Naive thymus-derived CD4-positive, alpha-beta T cell (primary cell): ENCODE measurements at regions of chr1 and their contacts with region 1.

Region 1: GRCh38 chr1:151156515-151156819 is at the start of gene TNFAIP8L2:
- DNase-seq: peak in 7 of 9 donors; percentile 50 to 75 (median 66)
- ATAC-seq: peak; percentile 90
- H3K4me3 ChIP-seq: peak within 1 kb of the TSS; percentile 98
- H3K4me3 Mint-ChIP-seq: peak within 1 kb of the TSS; percentile 93 to 100 (median 99)
- H3K27ac ChIP-seq: peak within 1 kb of the TSS; percentile 78
- H3K27ac Mint-ChIP-seq: peak within 1 kb of the TSS; percentile 88 to 97 (median 95)
- H3K4me1 ChIP-seq: peaks cover 23 to 27% of the 10 kb centered on the region in 2 donors
- H3K4me1 Mint-ChIP-seq: peaks cover 34 to 61% (median 46%) of the 10 kb centered on the region in 7 donors
- H3K27me3 ChIP-seq: no peaks in the 10 kb centered on the region
- H3K27me3 Mint-ChIP-seq: no peaks in the 10 kb centered on the region
- total RNA-seq, gene TNFAIP8L2: 3.1 to 59.4 (median 37.6) TPM

Region 2: GRCh38 chr1:150389650-150390049 is 766.8 kb before region 1 on chr1:
- CTCF ChIA-PET with region 1: no interaction called
- POLR2A ChIA-PET with region 1: no interaction called
- intact Hi-C with region 1: no loop called
- DNase-seq: no peak
- ATAC-seq: no peak
- H3K4me3 ChIP-seq: no peak overlapping the region
- H3K4me3 Mint-ChIP-seq: peak overlapping the region in 1 of 10 donors; percentile 35
- H3K27ac ChIP-seq: no peak overlapping the region
- H3K27ac Mint-ChIP-seq: peak overlapping the region in 5 of 9 donors; percentile 1 to 63 (median 24)
- H3K4me1 ChIP-seq: peaks cover 5 to 17% of the 10 kb centered on the region in 2 donors
- H3K4me1 Mint-ChIP-seq: peaks cover 26 to 78% (median 67%) of the 10 kb centered on the region in 7 donors
- H3K27me3 ChIP-seq: no peaks in the 10 kb centered on the region
- H3K27me3 Mint-ChIP-seq: no peaks in the 10 kb centered on the region

Region 3: DNA sequence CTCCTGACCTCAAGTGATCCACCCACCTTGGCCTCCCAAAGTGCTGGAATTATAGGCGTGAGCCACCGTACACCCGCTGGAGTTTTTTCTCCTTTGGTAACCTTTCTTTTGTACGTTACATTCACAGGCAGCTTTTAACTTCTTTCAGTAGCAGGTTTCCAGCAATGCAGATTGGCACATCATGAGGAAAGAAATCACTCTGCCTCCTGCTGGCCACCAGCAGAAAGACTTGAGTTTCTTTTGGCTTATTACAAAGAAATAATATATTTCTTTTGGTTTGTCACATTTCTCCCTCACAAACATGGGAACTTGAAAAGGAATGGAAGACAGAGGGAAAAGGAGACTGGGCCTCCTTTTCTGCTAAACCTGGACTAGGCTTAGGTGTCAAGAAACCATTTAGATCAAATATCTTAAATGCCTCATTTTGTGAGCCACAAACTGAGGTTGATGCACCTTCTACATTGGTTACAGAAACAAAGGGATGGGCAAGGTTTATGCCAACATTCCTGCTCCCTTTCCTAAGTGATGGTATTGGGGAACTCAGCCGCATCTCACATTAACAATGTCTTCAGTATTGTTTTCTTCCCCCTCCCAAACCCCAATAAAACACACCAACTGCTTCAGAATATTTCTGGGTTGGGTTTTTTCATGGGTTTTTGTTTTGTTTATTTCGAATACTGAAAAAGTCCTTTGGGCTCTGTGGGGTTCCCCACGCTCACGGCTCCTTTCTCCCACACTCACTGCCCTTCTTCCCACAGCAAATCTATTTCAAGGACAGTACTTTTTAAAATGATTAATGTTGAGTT is 534.8 kb before region 1 on chr1:
- CTCF ChIA-PET with region 1: no interaction called
- POLR2A ChIA-PET with region 1: no interaction called
- intact Hi-C with region 1: loop called (anchors 2 to 10 kb)
- DNase-seq: peak in 7 of 9 donors; percentile 53 to 74 (median 65)
- ATAC-seq: peak; percentile 78
- H3K4me3 ChIP-seq: no peak overlapping the region
- H3K4me3 Mint-ChIP-seq: peak overlapping the region in 8 of 10 donors; percentile 16 to 64 (median 46)
- H3K27ac ChIP-seq: peak overlapping the region; percentile 49
- H3K27ac Mint-ChIP-seq: peak overlapping the region; percentile 48 to 91 (median 83)
- H3K4me1 ChIP-seq: peaks cover 5 to 32% of the 10 kb centered on the region in 2 donors
- H3K4me1 Mint-ChIP-seq: peaks cover 17 to 65% (median 51%) of the 10 kb centered on the region in 7 donors
- H3K27me3 ChIP-seq: no peaks in the 10 kb centered on the region
- H3K27me3 Mint-ChIP-seq: no peaks in the 10 kb centered on the region

Region 4: GRCh38 chr1:150979092-150980056 is 177.1 kb before region 1 on chr1:
- CTCF ChIA-PET with region 1: no interaction called
- POLR2A ChIA-PET with region 1: interaction called, 4 read pairs
- intact Hi-C with region 1: loop called (anchors 1 kb)
- DNase-seq: peak; percentile 68 to 93 (median 84)
- ATAC-seq: peak; percentile 81
- H3K4me3 ChIP-seq: peak overlapping the region; percentile 39
- H3K4me3 Mint-ChIP-seq: peak overlapping the region in 9 of 10 donors; percentile 39 to 73 (median 61)
- H3K27ac ChIP-seq: peak overlapping the region; percentile 67
- H3K27ac Mint-ChIP-seq: peak overlapping the region; percentile 9 to 83 (median 62)
- H3K4me1 ChIP-seq: peaks cover 24 to 34% of the 10 kb centered on the region in 2 donors
- H3K4me1 Mint-ChIP-seq: peaks cover 14 to 44% (median 37%) of the 10 kb centered on the region in 7 donors
- H3K27me3 ChIP-seq: no peaks in the 10 kb centered on the region
- H3K27me3 Mint-ChIP-seq: no peaks in the 10 kb centered on the region

Region 5: DNA sequence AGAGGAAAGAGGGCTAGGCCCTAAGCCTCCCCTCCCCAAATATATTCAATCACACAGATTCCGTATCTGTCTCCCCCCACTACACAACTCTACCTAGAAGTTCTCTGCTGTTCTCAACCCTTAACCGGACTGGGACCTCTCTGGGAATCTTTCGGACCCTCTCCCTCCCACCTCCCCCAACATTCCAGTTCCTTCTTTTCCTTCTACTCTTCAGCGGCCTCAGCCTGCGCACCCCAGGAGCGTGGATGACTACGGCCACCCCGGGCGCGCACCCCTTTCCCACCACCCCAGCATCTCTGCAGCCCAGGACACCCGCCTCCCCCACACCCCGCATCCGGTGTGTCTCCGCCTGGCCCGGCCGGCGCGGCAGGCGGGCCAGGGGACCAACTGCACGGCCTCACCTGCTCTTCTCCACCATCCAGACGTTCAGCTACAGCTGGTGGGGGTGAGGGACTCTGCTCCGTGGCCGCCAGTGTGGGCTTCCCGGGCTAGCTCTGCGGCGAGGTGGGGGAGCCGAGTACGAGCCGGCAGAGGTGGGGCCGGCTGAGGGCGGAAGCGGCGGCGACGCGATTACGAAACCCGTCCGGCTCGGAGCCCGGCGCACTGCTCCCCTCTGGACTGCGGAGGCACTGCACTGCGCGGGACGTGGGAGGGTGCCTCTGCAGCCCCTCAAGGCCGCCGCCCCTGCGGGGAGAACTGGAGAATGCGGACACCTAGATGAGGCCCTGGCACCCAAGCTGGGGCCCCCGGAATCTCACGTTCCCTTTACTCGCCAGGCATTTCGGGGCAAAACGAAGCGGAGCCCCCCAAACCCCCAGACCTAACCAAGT is 97.2 kb before region 1 on chr1 and contains the start of gene CDC42SE1:
- CTCF ChIA-PET with region 1: interaction called, 6 read pairs
- POLR2A ChIA-PET with region 1: interaction called, 76 read pairs
- intact Hi-C with region 1: loop called (anchors 1 kb)
- DNase-seq: peak; percentile 76 to 85 (median 82)
- ATAC-seq: peak; percentile 84
- H3K4me3 ChIP-seq: peak within 1 kb of the TSS; percentile 82
- H3K4me3 Mint-ChIP-seq: peak within 1 kb of the TSS; percentile 95 to 100 (median 99)
- H3K27ac ChIP-seq: peak within 1 kb of the TSS; percentile 99
- H3K27ac Mint-ChIP-seq: peak within 1 kb of the TSS; percentile 93 to 99 (median 95)
- H3K4me1 ChIP-seq: peaks cover 11 to 26% of the 10 kb centered on the region in 2 donors
- H3K4me1 Mint-ChIP-seq: peaks cover 35 to 55% (median 41%) of the 10 kb centered on the region in 7 donors
- H3K27me3 ChIP-seq: no peaks in the 10 kb centered on the region
- H3K27me3 Mint-ChIP-seq: no peaks in the 10 kb centered on the region
- total RNA-seq, gene CDC42SE1: 362 to 516 (median 425) TPM

Region 6: GRCh38 chr1:151106894-151107293 is 49.6 kb before region 1 on chr1:
- CTCF ChIA-PET with region 1: interaction called, 130 read pairs
- POLR2A ChIA-PET with region 1: interaction called, 40 read pairs
- intact Hi-C with region 1: no loop called
- DNase-seq: no peak
- ATAC-seq: no peak
- H3K4me3 ChIP-seq: no peak overlapping the region
- H3K4me3 Mint-ChIP-seq: no peak overlapping the region
- H3K27ac ChIP-seq: no peak overlapping the region
- H3K27ac Mint-ChIP-seq: no peak overlapping the region
- H3K4me1 ChIP-seq: no peaks in the 10 kb centered on the region
- H3K4me1 Mint-ChIP-seq: no peaks in the 10 kb centered on the region
- H3K27me3 ChIP-seq: no peaks in the 10 kb centered on the region
- H3K27me3 Mint-ChIP-seq: no peaks in the 10 kb centered on the region

Region 7: DNA sequence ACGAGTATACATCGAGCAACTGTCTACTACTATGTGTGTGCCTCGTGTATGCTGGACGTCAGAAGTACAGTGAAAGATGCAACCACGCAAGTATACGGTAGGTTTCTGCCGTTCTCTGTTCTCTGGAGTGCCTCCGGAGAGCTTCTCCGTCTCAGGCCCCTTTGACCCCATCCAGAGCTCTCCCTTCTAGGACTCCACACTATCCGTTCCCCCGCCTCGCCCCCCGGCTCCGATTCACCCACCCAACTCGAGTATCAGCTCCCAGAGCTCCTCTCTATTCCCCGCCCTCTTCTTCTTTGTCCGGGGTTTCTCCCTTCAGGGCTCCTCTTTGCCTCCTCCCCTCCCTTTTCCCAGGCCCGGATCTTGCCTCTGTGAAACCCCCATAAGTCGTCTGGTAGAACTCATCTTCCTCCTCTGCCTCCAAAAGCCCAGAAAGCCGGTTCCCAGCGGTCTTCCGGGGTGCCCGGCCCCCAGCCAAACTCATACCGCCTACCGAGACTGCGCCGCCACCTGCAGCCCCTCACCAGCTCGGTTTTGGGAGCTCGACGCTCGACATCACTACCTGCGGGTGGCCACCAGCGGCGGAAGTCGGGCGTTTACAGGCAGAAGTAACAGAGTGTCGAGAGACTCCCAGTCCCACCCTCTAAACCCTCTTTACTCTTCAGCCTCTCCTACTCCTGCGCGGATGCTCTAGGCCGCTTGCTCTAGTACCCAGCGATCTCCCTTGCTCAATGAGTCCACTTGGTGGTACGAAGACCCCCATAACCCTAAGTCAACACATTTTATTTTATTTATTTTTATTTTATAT is 33.4 kb after region 1 on chr1 and contains the start of gene VPS72:
- CTCF ChIA-PET with region 1: interaction called, 6 read pairs
- POLR2A ChIA-PET with region 1: interaction called, 28 read pairs
- intact Hi-C with region 1: no loop called
- DNase-seq: peak; percentile 57 to 90 (median 85)
- ATAC-seq: peak; percentile 98
- H3K4me3 ChIP-seq: peak within 1 kb of the TSS; percentile 80
- H3K4me3 Mint-ChIP-seq: peak within 1 kb of the TSS; percentile 91 to 99 (median 98)
- H3K27ac ChIP-seq: peak within 1 kb of the TSS; percentile 78
- H3K27ac Mint-ChIP-seq: peak within 1 kb of the TSS; percentile 91 to 98 (median 97)
- H3K4me1 ChIP-seq: peaks cover 16% of the 10 kb centered on the region in 2 donors
- H3K4me1 Mint-ChIP-seq: peaks cover 23 to 47% (median 35%) of the 10 kb centered on the region in 7 donors
- H3K27me3 ChIP-seq: no peaks in the 10 kb centered on the region
- H3K27me3 Mint-ChIP-seq: peaks cover 0 to 8% (median 0%) of the 10 kb centered on the region in 5 donors
- total RNA-seq, gene VPS72: 35.1 to 82.0 (median 63.9) TPM